ENCODE measurements at regions of chr1 and their contacts with region 1.

Region 1: DNA sequence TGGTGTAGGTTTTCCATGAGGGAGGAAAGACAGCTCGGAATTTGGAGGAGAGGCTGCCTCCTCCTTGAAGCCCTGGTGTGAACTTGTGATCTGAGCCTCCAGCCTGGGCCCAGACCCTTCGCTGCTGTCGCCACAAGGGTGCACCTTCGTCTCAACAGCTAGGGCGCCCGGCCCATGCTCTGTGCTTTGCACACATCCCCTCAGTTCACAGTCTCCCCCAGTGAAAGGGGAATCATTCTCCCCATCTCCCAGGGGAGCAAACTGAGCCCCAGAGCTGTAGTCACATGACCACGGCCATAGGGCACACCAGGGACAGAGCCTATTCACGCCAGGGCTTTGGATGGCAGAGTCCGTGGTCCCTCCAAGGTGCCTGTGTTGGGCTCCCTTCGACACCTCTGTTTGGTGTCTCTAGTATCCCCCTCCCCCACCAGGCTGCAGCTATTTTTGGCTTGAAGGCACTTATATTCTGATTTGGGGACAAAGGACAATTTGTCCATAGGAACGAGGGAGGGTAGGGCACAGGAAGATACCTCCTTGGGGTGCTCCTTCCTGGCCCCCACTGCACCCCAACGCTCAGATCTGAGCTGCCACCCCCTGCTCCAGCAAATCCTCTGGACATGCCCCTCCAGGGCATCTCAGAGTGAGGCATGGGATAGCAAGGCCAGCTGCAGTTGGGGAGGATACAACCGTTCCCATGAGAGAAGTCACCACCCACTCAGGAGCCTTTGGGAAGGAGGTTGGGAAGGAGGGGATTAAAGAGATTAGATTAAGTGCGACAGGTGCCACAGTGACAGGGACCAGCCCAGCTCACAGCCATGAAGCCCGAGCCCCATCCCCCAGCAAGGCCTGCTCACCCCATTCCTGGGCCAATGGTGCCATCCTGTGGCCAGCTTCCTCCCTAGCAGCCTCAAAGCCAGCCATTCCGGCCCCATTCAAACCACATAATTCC is 15.7 kb downstream of the MATN1 start:
- DNase-seq: peak; percentile 73
- ATAC-seq: peak; percentile 83 to 86

Region 2: DNA sequence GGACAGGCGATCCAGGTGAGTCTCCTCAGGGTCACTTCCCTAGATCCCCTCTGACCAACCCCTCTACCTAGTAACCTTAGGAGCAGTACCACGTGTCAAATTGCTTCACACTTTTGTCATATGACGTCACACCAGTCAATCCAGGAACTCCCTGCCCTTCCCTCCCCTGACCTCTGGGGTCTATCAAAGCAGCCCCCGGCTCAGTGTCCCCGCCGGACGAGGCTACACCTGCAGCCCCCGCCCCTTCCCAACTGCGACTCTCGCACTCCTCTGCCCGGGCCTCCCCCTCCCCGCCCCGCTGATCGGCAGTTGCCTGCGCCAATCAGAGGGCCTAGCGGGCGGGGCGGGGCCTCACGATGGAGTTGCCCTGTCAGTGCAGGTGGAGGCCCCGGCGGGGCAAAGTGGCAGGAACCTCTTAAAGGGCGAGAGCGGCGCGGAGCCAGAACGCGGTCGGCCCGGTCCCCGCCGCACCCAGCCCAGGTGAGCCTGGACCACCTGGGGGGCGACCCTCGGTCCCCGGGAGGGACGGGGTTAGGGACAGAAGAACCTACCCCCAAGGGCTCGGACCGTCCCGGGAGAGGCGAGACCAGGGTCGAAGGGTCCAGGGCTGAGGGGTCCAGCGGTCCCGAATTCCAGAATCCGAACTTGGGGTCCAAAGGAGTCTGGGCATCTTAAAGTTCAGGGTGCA is 1820.8 kb before region 1 on chr1:
- intact Hi-C with region 1: loop called in 1 of 2 experiments (anchors 10 kb)
- DNase-seq: peak; percentile 87
- ATAC-seq: peak; percentile 83 to 87

Region 3: DNA sequence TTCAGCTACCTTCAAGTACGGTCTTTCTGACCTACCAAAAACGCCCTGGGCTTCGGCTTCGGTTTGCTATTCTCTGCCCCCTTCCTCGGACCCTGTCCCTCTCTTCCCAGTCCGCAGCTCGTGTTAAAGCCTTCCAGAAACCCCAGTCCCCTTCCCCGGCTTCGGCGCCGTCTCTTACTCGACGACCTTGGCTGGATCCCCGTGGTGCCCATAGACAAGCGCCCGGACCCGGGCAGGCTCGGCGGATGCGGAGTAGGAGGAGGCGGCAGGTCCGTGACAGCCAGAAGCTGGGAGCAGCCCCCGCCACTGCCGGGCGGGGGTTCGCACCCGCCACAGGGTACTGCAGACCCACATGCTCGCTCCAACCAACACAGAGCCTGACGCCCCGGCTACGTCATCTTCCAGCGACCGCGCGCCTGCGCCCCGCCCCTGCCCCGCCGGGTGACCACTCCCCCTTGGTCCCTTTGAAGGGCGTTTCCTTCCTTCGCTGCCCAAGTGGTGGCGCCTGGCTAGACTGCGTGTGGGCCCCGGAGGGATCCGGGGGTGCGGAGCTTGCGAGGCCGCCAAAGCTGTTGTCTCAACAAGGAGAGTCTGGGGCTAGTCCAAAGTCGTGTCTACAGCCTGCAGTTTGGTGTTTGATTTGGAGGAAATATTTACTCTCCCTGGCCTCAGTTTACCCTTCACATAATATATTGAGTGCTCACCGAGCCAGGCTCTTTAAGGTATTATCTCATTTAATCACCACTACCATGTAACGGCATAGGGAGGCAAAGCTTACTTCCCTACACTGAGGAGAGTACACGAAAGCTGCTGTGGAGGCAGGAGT is 1476.9 kb before region 1 on chr1 and contains the start of gene MECR:
- intact Hi-C with region 1: loop called in 1 of 2 experiments (anchors 10 kb)
- DNase-seq: peak; percentile 95
- ATAC-seq: peak; percentile 99
- total RNA-seq, gene MECR: 25.8 to 26.2 TPM

Region 4: DNA sequence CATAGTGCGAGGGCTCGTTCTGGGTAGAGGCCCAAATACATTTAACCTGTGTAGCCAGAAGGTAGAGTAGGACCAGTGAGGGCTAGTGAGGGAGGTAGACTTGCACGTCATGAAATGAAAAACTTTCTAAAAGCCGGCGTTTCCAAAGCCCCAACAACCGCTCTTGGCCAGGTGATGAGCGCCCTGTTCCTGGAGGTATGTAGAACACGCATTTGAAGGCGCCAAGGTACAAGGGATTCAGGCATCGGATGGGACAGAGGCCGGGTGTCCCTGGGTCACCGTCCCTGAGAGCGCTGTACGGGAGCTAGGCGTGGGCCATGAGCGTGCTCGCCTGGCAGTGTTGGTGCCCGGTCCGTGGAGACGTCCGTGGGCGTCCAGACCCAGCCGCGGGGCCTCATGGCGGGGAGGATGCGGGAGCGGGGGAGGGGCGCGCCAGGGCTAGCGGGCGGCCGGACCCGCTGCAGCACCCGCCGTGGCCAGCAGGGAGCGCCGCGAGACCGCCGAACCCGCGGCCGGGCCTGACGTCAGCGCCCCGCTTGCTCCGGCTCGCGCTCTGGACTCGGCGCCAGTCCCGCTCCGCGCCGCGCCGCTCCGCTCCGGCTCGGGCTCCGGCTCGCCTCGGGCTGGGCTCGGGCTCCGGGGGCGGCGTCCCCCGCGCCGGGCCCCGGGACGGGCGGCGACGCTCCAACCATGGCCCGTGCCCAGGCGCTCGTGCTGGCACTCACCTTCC is 1471.6 kb before region 1 on chr1 and contains the start of gene PTPRU:
- intact Hi-C with region 1: loop called (anchors 1 to 10 kb)
- DNase-seq: peak; percentile 87
- ATAC-seq: peak; percentile 86 to 88
- total RNA-seq, gene PTPRU: 13.6 to 18.2 TPM

Region 5: GRCh38 chr1:30353637-30354036 is 354.0 kb before region 1 on chr1:
- intact Hi-C with region 1: loop called in 1 of 2 experiments (anchors 10 kb)
- DNase-seq: no peak
- ATAC-seq: no peak

Region 6: DNA sequence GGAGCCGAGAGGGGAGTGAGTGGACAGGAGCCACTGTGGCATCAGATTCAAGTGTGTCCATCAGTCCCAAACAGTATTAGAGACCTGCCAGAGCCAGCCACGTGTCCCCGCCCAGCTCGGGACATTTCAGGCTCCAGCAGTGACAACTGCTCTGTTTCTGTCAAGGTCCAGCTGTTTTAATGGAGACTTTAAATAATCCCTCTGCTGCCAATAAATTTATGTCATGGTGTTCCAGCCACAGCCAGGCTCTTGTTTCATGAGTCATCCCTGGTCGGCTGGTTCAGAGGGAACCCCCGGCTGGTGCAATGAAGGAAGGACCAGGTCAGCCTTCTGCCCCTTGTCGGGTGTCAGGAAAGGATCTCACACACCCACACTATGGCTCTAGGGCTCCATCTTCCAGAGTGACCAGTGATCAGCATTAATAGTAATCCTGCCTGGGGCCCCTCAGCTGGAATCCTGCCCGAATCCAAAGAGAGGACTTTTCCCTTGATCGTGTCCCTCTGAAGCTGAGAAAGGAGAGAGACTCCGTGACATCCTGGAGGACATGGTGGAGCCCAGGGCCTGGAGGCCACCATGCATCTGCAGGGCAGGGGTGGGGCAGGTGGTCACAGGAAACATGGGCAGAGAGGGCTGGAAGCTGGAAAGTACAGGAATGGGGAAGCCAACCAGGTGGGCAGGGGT is 181.6 kb before region 1 on chr1:
- intact Hi-C with region 1: loop called in 1 of 2 experiments (anchors 2 kb)
- DNase-seq: peak; percentile 62
- ATAC-seq: peak in 1 of 2 donors; percentile 49

Region 7: GRCh38 chr1:30756545-30757195 is 49.0 kb after region 1 on chr1:
- intact Hi-C with region 1: no loop called
- DNase-seq: peak; percentile 70
- ATAC-seq: peak; percentile 68 to 88